Posterior vena cava (tissue), 2 donors: ENCODE measurements at regions of chr17 and their contacts with region 1.

Region 1: GRCh38 chr17:18344021-18344420 is 19.3 kb downstream of the SHMT1 start:
- DNase-seq: no peak

Region 2: DNA sequence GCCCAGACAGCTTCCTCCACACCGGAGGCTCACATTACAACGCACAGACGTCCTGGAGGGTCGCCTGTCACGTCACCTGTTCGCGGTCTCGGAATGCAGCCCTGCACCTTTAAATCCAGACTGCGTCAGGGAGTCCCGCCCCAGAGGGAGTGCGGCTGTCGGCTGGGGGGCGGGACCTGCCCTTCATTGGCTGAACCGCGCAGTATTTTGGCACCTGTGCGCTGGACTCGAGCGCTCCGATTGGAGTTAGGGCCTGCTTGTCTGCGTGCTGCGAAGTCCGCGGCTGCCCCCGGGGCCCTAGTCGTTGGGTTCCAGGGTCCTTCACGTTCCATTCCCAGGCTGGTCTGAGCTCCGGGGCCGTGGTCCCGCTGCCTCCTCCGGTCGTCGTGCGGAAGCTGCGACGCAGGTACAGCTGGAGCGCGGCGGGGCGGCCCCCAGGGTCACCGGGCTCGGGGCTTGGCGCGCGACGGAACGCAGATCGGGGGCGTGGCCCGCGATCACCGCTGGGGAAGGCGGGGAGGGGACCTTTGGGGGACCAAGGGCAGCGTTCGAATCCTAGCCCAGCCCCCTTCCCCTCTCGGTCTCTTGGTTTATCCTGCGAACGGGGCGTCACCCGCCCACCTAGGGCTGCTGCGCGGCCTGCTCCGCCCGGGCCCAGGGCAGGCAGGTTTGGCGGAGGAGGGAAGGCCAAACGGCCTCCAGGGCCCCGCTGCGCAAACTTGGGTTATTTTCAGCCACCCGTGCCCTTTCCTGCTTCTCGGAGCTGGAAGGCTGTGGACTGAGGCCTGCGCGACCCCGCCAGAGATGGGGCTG is 83.5 kb before region 1 on chr17 and contains the start of gene MIEF2:
- intact Hi-C with region 1: no loop called
- DNase-seq: peak; percentile 97
- total RNA-seq, gene MIEF2: 7.7 to 11.3 TPM

Region 3: DNA sequence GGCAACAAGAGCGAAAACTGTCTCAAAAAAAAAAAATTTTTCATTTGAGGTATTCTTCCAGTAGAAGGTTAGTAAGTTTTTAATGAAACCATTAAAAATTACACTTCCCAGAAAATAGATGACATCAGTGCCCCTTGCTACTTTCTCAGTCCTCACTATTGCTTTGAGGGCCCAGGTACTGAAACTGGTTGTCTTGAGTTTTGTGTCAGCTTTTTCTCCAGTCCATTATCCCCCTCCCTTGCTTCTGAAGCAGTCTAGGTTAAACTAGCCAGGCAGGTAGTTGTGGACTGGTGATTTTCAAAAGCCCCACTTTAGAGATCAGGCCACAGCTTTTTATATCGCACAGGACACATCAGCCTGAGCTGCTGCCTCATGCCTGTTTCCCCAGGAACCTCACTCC is 18.0 kb before region 1 on chr17:
- intact Hi-C with region 1: loop called in 1 of 2 experiments (anchors 2 kb)
- DNase-seq: no peak

Region 4: GRCh38 chr17:18363101-18364049 is 19.4 kb after region 1 on chr17 and contains the start of gene SHMT1:
- intact Hi-C with region 1: loop called in 1 of 2 experiments (anchors 1 kb)
- DNase-seq: peak; percentile 96
- total RNA-seq, gene SHMT1: 9.6 to 19.3 TPM

Region 5: DNA sequence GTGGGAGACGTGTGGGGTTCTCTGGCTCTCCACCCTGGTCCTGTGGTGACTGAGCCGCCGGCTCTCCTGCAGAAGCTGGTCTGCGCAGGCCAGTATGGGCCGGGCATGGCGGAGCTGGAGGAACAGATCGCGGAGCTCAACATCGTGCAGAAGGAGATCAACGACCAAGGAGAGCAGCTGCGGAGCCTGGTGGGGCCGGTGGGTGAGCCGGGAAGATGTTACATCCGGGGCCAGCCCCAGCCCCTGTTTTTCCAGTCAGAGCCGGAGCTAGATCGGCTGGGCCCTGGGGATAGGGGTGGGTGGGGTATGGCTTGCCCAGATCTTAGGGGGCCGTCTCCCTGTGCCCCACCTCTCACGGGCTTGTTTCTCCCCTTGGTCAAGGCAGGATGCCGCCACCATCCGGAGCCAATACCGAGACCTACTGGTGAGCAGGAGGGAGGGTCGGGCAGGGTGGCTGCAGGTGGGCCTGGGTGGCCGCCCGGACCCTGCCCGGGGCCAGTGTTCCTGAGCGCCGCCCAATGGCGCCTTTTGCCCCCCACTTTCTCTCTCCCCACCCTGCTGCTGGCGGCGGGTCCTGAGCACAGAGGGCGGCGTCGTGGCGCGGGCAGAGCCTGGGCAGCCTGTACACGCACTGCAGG is 38.5 kb after region 1 on chr17:
- intact Hi-C with region 1: no loop called
- DNase-seq: peak; percentile 74